SK-N-SH (cell line): ENCODE measurements at regions of chr6 and their contacts with region 1.

Region 1: GRCh38 chr6:79869600-79870084 is 77.7 kb downstream of the ELOVL4 start:
- DNase-seq: peak; percentile 82
- H3K4me3 ChIP-seq: peak overlapping the region; percentile 22 to 31; a peak in 2 of 4 replicates
- H3K27ac ChIP-seq: no peak overlapping the region
- H3K4me1 ChIP-seq: peaks cover 0 to 14% of the 10 kb centered on the region in 2 experiments; a peak in 2 of 4 replicates
- H3K27me3 ChIP-seq: no peaks in the 10 kb centered on the region
- CTCF ChIP-seq: peak; percentile 82
- EP300 ChIP-seq: peak in 1 of 2 experiments; percentile 5; a peak in 1 of 4 replicates
- RAD21 ChIP-seq: peak; percentile 76

Region 2: GRCh38 chr6:79466207-79466834 is 403.3 kb before region 1 on chr6:
- CTCF ChIA-PET with region 1: interaction called, 10 read pairs
- POLR2A ChIA-PET with region 1: no interaction called
- DNase-seq: peak; percentile 36
- H3K4me3 ChIP-seq: no peak overlapping the region; a peak in 1 of 4 replicates
- H3K27ac ChIP-seq: peak overlapping the region in 1 of 2 experiments; percentile 62; a peak in 2 of 4 replicates
- H3K4me1 ChIP-seq: peaks cover 0 to 14% of the 10 kb centered on the region in 2 experiments
- H3K27me3 ChIP-seq: no peaks in the 10 kb centered on the region
- CTCF ChIP-seq: peak; percentile 64
- EP300 ChIP-seq: no peak
- RAD21 ChIP-seq: peak; percentile 86

Region 3: DNA sequence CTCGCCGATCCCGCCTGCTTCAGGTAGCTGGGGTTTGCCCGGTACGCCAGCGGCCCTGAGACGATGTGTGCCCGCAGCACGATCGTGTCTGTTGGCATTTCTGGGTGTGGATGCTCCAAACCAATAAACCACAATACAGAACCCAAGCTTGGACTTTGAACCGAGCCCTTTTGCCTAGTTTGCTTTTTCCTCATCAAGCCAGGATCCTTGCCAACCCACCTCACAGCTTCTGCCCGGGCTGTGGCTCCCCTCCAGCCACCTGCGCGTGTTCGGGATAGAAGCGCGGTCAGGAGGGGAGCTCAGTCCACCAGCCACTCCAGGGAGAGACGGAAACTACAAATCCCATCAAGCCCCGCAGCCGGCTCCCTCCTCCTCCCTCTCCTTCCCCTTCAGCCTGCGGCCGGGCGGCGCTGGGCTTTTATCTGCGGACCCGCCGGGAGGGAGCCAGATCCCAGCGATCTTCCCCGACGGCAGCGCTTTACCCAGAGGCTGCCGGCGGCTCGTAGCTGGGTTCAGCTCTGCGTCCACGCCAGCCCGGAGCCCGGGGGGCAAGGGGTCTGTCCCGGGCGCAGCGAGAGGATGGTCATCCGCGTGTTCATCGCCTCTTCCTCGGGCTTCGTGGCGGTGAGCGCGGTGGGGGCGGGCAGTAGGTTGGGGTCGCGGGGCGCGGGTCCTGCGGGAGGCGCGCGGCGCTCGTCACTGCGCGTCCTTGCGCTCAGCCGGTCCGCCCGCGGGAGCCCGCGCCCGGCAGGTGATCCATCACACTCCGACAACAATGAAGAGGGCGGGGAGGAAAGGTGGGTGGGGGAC is 238.6 kb before region 1 on chr6 and contains the start of gene SH3BGRL2:
- CTCF ChIA-PET with region 1: interaction called, 32 read pairs
- POLR2A ChIA-PET with region 1: no interaction called
- DNase-seq: peak; percentile 95
- H3K4me3 ChIP-seq: peak within 1 kb of the TSS; percentile 82 to 92
- H3K27ac ChIP-seq: peak within 1 kb of the TSS in 1 of 2 experiments; percentile 79; a peak in 2 of 4 replicates
- H3K4me1 ChIP-seq: peaks cover 11 to 13% of the 10 kb centered on the region in 2 experiments; a peak in 3 of 4 replicates
- H3K27me3 ChIP-seq: no peaks in the 10 kb centered on the region
- CTCF ChIP-seq: no peak
- EP300 ChIP-seq: no peak
- RAD21 ChIP-seq: no peak
- polyA plus RNA-seq, gene SH3BGRL2: 1.4 and 1.6 TPM in 2 replicates

Region 4: GRCh38 chr6:79777713-79778579 is 91.7 kb before region 1 on chr6:
- CTCF ChIA-PET with region 1: interaction called, 46 read pairs
- POLR2A ChIA-PET with region 1: no interaction called
- DNase-seq: peak; percentile 92
- H3K4me3 ChIP-seq: peak overlapping the region; percentile 34 to 44
- H3K27ac ChIP-seq: peak overlapping the region in 1 of 2 experiments; percentile 51; a peak in 2 of 4 replicates
- H3K4me1 ChIP-seq: peaks cover 0 to 9% of the 10 kb centered on the region in 2 experiments; a peak in 2 of 4 replicates
- H3K27me3 ChIP-seq: no peaks in the 10 kb centered on the region
- CTCF ChIP-seq: peak; percentile 94
- EP300 ChIP-seq: no peak
- RAD21 ChIP-seq: peak; percentile 89

Region 5: GRCh38 chr6:79833264-79833963 is 36.2 kb before region 1 on chr6:
- CTCF ChIA-PET with region 1: interaction called, 13 read pairs
- POLR2A ChIA-PET with region 1: no interaction called
- DNase-seq: peak; percentile 58
- H3K4me3 ChIP-seq: no peak overlapping the region
- H3K27ac ChIP-seq: peak overlapping the region in 1 of 2 experiments; percentile 79; a peak in 2 of 4 replicates
- H3K4me1 ChIP-seq: peaks cover 5 to 14% of the 10 kb centered on the region in 2 experiments
- H3K27me3 ChIP-seq: no peaks in the 10 kb centered on the region; the same call in 1 of the 2 replicates
- CTCF ChIP-seq: no peak
- EP300 ChIP-seq: peak in 1 of 2 experiments; percentile 88; a peak in 2 of 4 replicates
- RAD21 ChIP-seq: no peak

Region 6: GRCh38 chr6:79898076-79898475 is 28.4 kb after region 1 on chr6:
- CTCF ChIA-PET with region 1: interaction called, 21 read pairs
- POLR2A ChIA-PET with region 1: no interaction called
- DNase-seq: no peak
- H3K4me3 ChIP-seq: no peak overlapping the region
- H3K27ac ChIP-seq: no peak overlapping the region
- H3K4me1 ChIP-seq: 0 out of 4 replicates have a peak, but pooled peaks cover 0 to 5% of the 10 kb centered on the region in 2 experiments
- H3K27me3 ChIP-seq: no peaks in the 10 kb centered on the region
- CTCF ChIP-seq: no peak
- EP300 ChIP-seq: no peak
- RAD21 ChIP-seq: no peak